ENCODE measurements at regions of chr11 and their contacts with region 1.

Region 1: DNA sequence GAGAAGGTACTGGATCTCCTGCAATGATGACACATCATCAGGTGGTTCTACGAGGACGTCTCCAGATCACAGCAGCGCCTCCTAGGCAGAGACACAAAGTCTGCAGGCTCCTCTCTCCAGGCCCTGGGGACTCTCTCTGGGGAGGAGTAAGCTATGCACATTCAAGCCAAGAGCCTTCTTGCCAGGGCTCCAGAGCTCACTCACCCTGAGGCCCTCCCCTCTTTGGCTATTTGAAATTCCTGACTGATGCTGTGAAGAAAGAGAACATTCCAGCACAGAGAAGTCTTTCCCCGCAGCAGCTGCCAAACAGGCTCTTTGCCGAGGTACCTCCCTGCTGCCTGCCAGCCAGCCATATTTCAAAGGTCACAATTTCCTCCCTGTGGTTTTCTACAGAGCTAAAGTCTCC is 204.9 kb downstream of the CSNK2A3 start:
- DNase-seq: peak; percentile 43 to 93
- H3K4me3 ChIP-seq: no peak overlapping the region
- H3K27ac ChIP-seq: peak overlapping the region; percentile 46
- H3K4me1 ChIP-seq: peaks cover 1 to 24% of the 10 kb centered on the region in 2 donors
- H3K27me3 ChIP-seq: no peaks in the 10 kb centered on the region
- CTCF ChIP-seq: peak in 2 of 3 experiments; percentile 42 to 46

Region 2: DNA sequence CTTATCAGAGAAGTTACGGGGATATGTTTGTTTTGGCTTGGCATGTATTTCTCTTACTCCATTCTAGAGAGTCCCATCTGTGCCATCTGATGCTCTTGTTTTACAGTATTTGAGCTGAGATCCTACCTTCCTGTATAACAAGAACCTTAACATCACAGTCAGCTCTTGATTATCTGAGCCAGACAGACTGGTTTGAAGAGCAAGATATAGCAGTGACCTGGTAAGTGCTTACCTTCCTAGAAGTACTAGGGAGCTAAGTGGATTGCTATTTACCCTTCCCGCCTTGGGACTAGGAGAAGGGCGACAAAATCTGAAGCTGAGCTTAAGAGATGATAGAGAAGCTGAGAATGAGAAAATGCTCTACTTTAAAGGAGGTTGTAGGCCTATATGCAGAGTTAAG is 30.4 kb before region 1 on chr11:
- intact Hi-C with region 1: no loop called
- DNase-seq: no peak
- H3K4me3 ChIP-seq: no peak overlapping the region
- H3K27ac ChIP-seq: no peak overlapping the region
- H3K4me1 ChIP-seq: no peaks in the 10 kb centered on the region
- H3K27me3 ChIP-seq: no peaks in the 10 kb centered on the region
- CTCF ChIP-seq: no peak

Region 3: GRCh38 chr11:11178671-11179638 is 30.8 kb after region 1 on chr11:
- intact Hi-C with region 1: no loop called
- DNase-seq: no peak
- H3K4me3 ChIP-seq: no peak overlapping the region
- H3K27ac ChIP-seq: peak overlapping the region in 1 of 2 donors; percentile 2
- H3K4me1 ChIP-seq: peaks cover 0 to 2% of the 10 kb centered on the region in 2 donors
- H3K27me3 ChIP-seq: no peaks in the 10 kb centered on the region
- CTCF ChIP-seq: no peak

Region 4: DNA sequence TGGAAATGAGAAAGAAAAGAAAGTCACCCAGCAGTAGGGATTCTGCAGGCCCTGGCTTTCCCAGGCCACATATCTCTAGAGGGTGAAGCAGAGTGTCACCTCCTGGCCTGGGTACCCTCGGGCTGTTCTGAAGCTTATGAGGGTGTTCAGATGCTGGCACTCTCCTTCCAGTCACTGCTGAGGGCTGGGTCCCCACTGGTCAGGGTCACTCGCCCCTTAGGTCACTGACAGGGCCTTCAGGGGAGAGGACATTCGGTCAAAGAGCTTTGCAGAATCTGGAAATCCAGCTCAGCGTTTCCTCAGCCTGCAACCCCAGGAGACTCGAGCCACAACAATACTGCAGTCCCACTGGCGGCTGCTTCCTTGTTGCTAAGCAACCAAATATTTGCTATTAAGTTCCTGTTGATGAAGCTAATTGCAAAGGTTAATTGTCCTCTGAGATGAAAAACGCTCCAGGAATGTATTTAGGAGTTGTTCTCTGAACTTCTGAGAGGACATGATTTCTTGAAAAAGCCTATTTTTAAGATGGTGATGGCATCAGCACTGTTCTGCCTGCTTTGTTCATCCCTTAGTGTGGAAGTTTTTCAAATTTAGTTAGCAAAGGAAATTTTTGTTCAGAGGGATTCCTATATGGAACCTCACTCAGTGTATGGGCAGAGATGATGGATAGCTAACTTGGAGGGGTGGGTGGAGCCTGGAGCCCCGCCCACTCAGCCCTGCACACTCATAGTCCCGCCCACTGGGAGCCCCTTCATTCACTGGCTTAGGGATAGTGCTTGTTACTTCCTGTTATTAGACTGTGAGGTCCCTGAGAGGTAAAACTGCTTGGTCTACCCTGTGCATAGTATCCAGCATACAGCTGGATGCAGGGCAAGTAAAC is 95.7 kb after region 1 on chr11:
- intact Hi-C with region 1: loop called (anchors 5 kb)
- DNase-seq: peak in 1 of 2 donors; percentile 72
- H3K4me3 ChIP-seq: peak overlapping the region in 1 of 2 donors; percentile 13
- H3K27ac ChIP-seq: peak overlapping the region; percentile 73 to 74
- H3K4me1 ChIP-seq: peaks cover 10 to 36% of the 10 kb centered on the region in 2 donors
- H3K27me3 ChIP-seq: no peaks in the 10 kb centered on the region
- CTCF ChIP-seq: no peak